Activated naive CD4-positive, alpha-beta T cell treated with anti-CD3 and anti-CD28 coated beads for 36 hours (primary cell): ENCODE measurements at regions of chr12 and their contacts with region 1.

Region 1: DNA sequence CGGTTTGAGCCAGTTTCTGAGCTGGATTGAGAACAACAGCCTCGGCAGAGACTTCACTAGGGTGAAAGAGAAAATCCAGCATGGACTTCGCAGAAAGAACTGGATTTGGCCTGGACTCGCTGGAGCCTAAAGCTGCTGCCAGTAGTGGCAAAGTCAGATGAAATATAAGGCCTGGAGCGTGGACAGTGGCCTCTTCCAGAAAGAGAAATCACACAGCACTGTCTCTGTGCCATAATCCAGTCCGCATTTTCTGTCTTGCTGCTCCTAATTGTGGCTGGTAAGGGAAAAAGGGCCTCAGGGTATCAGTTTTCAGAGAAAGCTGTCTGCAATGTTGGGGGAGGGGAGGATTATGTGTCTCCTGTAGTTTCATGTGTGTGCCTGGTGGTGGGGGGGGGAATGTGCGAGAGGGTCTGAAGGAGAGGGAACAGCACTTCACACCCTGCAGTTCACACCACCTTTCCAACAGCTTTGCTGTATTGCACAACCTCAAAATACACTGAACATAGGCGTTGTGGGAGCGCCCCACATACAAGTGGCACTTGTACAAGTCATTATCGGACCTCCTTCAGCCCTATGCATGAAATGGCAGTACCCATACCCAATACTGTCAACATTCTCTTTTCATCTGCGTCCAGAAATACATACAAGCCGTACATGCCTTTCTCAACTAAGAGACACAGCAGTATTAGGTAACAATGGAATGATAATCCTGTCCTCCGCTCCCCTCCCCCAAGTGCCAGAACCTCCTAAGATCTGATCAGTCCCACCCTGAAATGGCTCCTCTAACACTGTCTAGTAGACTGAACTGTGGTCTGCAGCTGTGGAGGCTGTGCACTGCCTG is 107.5 kb upstream of the ATF7IP start:
- DNase-seq: peak; percentile 99
- H3K4me3 Mint-ChIP-seq: peak overlapping the region; percentile 73
- H3K27ac Mint-ChIP-seq: peak overlapping the region; percentile 98
- H3K4me1 Mint-ChIP-seq: peaks cover 53% of the 10 kb centered on the region
- H3K27me3 Mint-ChIP-seq: no peaks in the 10 kb centered on the region

Region 2: GRCh38 chr12:14278294-14278953 is 20.5 kb after region 1 on chr12:
- CTCF ChIA-PET with region 1: interaction called, 9 read pairs
- intact Hi-C with region 1: loop called (anchors 1 kb)
- DNase-seq: no peak
- H3K4me3 Mint-ChIP-seq: no peak overlapping the region
- H3K27ac Mint-ChIP-seq: no peak overlapping the region
- H3K4me1 Mint-ChIP-seq: peaks cover 18% of the 10 kb centered on the region
- H3K27me3 Mint-ChIP-seq: no peaks in the 10 kb centered on the region

Region 3: GRCh38 chr12:14394317-14395073 is 136.5 kb after region 1 on chr12:
- CTCF ChIA-PET with region 1: interaction called, 6 read pairs
- intact Hi-C with region 1: loop called (anchors 1 kb)
- DNase-seq: peak; percentile 62
- H3K4me3 Mint-ChIP-seq: peak overlapping the region; percentile 77
- H3K27ac Mint-ChIP-seq: peak overlapping the region; percentile 98
- H3K4me1 Mint-ChIP-seq: peaks cover 82% of the 10 kb centered on the region
- H3K27me3 Mint-ChIP-seq: no peaks in the 10 kb centered on the region

Region 4: DNA sequence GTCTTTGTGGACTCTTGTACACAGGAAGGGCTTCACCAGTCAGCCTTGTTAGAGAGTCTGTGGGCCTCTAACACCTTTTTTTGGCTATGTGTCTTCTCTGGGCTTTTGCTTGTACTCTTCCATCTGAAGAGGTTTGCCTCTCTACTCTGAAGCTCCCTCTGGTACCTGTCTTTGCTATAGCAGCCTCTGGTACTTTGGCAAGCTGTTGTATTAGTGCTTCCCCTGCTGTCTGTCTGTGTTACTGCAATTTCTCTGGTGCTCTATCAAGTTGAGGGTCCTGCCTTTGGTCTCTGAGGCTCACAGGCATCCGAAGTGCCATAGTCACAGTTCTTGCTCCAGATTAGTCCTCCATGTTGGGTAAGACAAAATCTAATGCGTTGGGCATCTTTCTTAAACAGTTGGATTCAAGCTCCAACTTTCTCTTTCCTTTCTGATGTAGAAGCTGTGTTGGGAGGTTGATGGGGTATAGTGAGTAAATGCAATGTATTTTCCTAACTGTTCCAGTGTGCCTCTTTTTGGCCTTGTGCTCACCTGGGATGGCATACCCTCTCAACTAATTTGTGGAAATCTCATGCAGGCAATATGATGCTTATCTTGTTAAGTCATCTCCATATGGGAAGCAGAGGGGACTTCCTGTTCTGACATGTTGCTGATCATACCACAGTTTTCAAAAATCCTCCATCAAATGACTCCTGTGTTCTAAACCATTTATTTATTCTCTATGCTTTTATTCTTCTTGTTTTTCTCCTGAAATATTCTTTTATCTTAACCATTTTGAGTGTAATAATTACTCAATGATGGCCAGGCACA is 196.3 kb after region 1 on chr12:
- CTCF ChIA-PET with region 1: interaction called, 4 read pairs
- intact Hi-C with region 1: loop called (anchors 1 kb)
- DNase-seq: peak; percentile 31
- H3K4me3 Mint-ChIP-seq: no peak overlapping the region
- H3K27ac Mint-ChIP-seq: peak overlapping the region; percentile 82
- H3K4me1 Mint-ChIP-seq: peaks cover 54% of the 10 kb centered on the region
- H3K27me3 Mint-ChIP-seq: no peaks in the 10 kb centered on the region

Region 5: DNA sequence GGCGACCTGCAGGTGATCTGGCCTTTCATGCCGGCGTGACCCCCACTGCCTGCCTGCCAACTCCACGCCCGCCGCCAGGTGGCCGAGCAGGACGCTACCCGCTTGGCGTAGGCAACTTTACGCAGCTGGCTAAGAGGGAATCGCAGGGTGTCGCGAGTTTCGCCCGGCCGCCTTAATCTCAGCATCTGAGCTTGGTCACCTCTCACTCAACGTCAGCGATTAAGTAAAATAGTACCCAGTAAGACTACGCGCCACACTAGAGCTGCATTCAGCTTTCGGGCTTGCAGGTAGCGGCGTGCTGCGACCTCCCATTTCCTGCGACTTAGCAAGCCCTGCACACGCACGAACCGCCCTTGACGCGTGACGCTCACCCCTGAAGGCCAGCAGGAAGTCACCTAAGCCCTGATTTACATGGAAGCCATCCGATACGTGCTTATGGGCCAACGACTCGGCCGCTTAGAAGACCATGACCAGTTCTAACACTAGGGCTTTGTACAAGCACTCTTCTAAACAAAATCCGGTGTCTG is 512.1 kb after region 1 on chr12:
- CTCF ChIA-PET with region 1: no interaction called
- intact Hi-C with region 1: loop called (anchors 1 kb)
- DNase-seq: peak; percentile 89
- H3K4me3 Mint-ChIP-seq: peak overlapping the region; percentile 97
- H3K27ac Mint-ChIP-seq: peak overlapping the region; percentile 98
- H3K4me1 Mint-ChIP-seq: peaks cover 38% of the 10 kb centered on the region
- H3K27me3 Mint-ChIP-seq: no peaks in the 10 kb centered on the region